CD4-positive, alpha-beta memory T cell (primary cell): ENCODE measurements at regions of chr10 and their contacts with region 1.

Region 1: GRCh38 chr10:124657806-124658205 is 86.4 kb downstream of the FAM53B start:
- DNase-seq: peak; percentile 60 to 79 (median 77)
- H3K4me3 ChIP-seq: peak overlapping the region; percentile 13 to 36
- H3K4me3 Mint-ChIP-seq: peak overlapping the region; percentile 31 to 87 (median 78)
- H3K27ac ChIP-seq: peak overlapping the region; percentile 67
- H3K27ac Mint-ChIP-seq: peak overlapping the region; percentile 88 to 98 (median 95)
- H3K4me1 ChIP-seq: peaks cover 92% of the 10 kb centered on the region
- H3K4me1 Mint-ChIP-seq: peaks cover 68 to 97% (median 84%) of the 10 kb centered on the region in 4 donors
- H3K27me3 ChIP-seq: no peaks in the 10 kb centered on the region
- H3K27me3 Mint-ChIP-seq: no peaks in the 10 kb centered on the region

Region 2: GRCh38 chr10:124632064-124632531 is 25.7 kb before region 1 on chr10:
- CTCF ChIA-PET with region 1: interaction called, 3 read pairs
- POLR2A ChIA-PET with region 1: interaction called, 12 read pairs
- intact Hi-C with region 1: no loop called
- DNase-seq: peak in 1 of 5 donors; percentile 37
- H3K4me3 ChIP-seq: no peak overlapping the region
- H3K4me3 Mint-ChIP-seq: no peak overlapping the region
- H3K27ac ChIP-seq: no peak overlapping the region
- H3K27ac Mint-ChIP-seq: peak overlapping the region in 6 of 7 donors; percentile 13 to 83 (median 62)
- H3K4me1 ChIP-seq: peaks cover 75% of the 10 kb centered on the region
- H3K4me1 Mint-ChIP-seq: peaks cover 45 to 95% (median 65%) of the 10 kb centered on the region in 4 donors
- H3K27me3 ChIP-seq: no peaks in the 10 kb centered on the region
- H3K27me3 Mint-ChIP-seq: no peaks in the 10 kb centered on the region

Region 3: DNA sequence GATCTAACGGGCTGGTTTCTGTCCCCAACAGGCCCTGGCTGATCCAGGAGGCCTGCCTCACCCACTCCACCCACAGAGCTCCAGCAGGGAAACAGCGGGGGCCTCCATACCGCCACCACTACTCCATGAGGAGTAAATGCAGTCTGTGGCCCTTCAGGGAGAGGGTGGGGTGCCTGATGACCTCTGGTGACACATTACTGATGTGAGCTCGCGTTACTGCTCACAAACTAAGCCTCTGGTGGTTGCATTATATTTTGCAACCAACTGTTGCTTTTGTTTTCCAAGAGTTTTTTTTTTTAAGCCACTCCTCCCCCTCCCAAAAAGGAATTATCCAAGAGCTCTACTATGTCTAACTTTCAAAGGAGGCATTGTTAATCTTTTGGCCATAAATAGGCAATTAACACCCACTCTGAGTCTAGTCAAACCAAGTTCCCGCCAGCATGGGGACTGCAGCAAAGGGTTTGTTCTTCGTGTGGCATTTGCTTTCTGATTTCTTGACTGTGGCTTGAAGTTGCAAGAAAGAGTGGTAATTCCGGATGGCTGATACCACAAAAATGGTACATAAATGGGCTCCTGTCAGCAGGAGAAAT is 13.8 kb after region 1 on chr10:
- CTCF ChIA-PET with region 1: interaction called, 87 read pairs
- POLR2A ChIA-PET with region 1: interaction called, 439 read pairs
- intact Hi-C with region 1: no loop called
- DNase-seq: peak in 1 of 5 donors; percentile 33
- H3K4me3 ChIP-seq: no peak overlapping the region
- H3K4me3 Mint-ChIP-seq: peak overlapping the region in 7 of 8 donors; percentile 53 to 84 (median 67)
- H3K27ac ChIP-seq: peak overlapping the region; percentile 43
- H3K27ac Mint-ChIP-seq: peak overlapping the region; percentile 83 to 96 (median 90)
- H3K4me1 ChIP-seq: peaks cover 100% of the 10 kb centered on the region
- H3K4me1 Mint-ChIP-seq: peaks cover 68 to 99% (median 88%) of the 10 kb centered on the region in 4 donors
- H3K27me3 ChIP-seq: no peaks in the 10 kb centered on the region
- H3K27me3 Mint-ChIP-seq: no peaks in the 10 kb centered on the region

Region 4: DNA sequence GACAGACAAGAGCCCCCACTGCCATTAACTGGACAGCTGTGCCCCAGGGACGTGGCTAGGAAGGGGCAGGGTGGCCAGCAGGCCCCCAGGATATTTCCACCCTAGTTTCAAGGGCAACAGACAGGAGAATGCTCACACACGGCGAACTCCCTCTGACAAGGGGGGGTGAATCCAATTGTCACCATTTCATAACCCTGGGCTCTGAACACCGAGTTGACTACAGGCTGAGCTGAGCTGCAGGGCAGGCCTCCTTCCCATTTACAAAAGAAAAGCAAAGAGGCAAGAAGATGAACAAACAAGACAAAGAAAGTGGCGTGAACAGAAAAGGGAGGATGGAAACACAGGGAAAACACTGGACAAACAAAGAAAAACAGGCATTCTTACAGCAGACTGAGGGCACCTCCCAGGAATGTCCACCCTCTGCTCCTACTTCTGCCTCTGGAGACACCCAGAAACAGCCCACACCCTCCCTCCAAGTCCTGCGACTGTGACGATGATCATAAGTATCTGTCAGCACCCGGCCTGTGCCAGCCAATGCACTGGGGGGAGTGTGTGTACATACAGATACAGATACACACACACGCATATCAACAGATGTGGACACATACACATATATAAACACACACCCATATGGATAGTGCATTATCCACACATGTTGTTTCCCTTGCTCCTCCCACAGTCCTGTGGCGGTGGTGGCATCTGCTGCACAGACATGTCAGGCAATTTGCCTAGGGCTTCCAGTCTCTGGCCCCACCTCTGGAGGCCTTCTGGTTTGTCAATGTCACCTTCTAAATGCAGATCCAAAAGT is 20.1 kb after region 1 on chr10:
- CTCF ChIA-PET with region 1: interaction called, 87 read pairs
- POLR2A ChIA-PET with region 1: interaction called, 439 read pairs
- intact Hi-C with region 1: no loop called
- DNase-seq: no peak
- H3K4me3 ChIP-seq: peak overlapping the region; percentile 36 to 56
- H3K4me3 Mint-ChIP-seq: peak overlapping the region; percentile 76 to 88 (median 79)
- H3K27ac ChIP-seq: peak overlapping the region; percentile 54
- H3K27ac Mint-ChIP-seq: peak overlapping the region; percentile 85 to 97 (median 92)
- H3K4me1 ChIP-seq: peaks cover 96% of the 10 kb centered on the region
- H3K4me1 Mint-ChIP-seq: peaks cover 70 to 99% (median 89%) of the 10 kb centered on the region in 4 donors
- H3K27me3 ChIP-seq: no peaks in the 10 kb centered on the region
- H3K27me3 Mint-ChIP-seq: no peaks in the 10 kb centered on the region

Region 5: DNA sequence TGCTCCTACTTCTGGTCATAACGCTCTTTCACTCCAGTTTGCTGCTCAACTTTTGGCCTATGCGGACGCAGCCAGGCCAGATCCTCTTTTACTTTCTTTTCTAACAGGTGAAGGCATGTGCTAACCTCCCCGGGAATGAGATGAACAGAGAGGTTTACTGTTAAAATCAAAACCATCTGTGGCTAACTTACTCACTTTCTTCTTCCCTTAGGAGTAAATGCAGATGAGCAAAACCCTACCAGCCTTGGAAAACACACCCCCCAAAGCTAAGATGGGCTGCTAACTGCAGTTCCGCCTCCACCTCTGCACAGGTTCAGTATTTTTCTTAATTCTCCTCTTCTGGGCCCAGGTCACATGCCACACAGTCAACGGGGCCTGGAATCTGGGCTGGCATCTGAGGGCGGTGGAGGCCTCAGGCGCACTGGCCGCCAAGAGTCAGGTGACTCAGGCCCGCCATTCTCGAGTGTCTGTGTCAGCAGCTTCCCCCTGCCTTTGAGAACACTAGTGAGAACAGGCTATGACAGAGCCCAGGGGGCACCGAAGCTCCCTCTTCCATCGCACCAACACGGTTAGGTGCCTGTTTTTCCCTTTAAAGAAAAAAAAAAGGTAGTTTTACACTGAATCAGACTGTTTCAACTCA is 75.2 kb after region 1 on chr10:
- CTCF ChIA-PET with region 1: interaction called, 5 read pairs
- POLR2A ChIA-PET with region 1: interaction called, 19 read pairs
- intact Hi-C with region 1: no loop called
- DNase-seq: peak; percentile 37 to 77 (median 48)
- H3K4me3 ChIP-seq: peak overlapping the region; percentile 9 to 15
- H3K4me3 Mint-ChIP-seq: peak overlapping the region; percentile 72 to 93 (median 80)
- H3K27ac ChIP-seq: peak overlapping the region; percentile 78
- H3K27ac Mint-ChIP-seq: peak overlapping the region; percentile 87 to 96 (median 94)
- H3K4me1 ChIP-seq: peaks cover 100% of the 10 kb centered on the region
- H3K4me1 Mint-ChIP-seq: peaks cover 77 to 100% (median 90%) of the 10 kb centered on the region in 4 donors
- H3K27me3 ChIP-seq: no peaks in the 10 kb centered on the region
- H3K27me3 Mint-ChIP-seq: no peaks in the 10 kb centered on the region